ENCODE measurements at regions of chr1 and their contacts with region 1.

Region 1: GRCh38 chr1:235999259-235999925 is 65.5 kb downstream of the NID1 start:
- DNase-seq: peak; percentile 77
- H3K4me3 Mint-ChIP-seq: peak overlapping the region; percentile 32
- H3K27ac Mint-ChIP-seq: peak overlapping the region; percentile 94
- H3K4me1 Mint-ChIP-seq: peaks cover 80% of the 10 kb centered on the region
- H3K27me3 Mint-ChIP-seq: peaks cover 3% of the 10 kb centered on the region

Region 2: GRCh38 chr1:234373064-234373958 is 1626.1 kb before region 1 on chr1 and contains the start of gene COA6:
- intact Hi-C with region 1: loop called (anchors 1 kb)
- DNase-seq: peak; percentile 85
- H3K4me3 Mint-ChIP-seq: peak within 1 kb of the TSS; percentile 97
- H3K27ac Mint-ChIP-seq: peak within 1 kb of the TSS; percentile 96
- H3K4me1 Mint-ChIP-seq: peaks cover 57% of the 10 kb centered on the region
- H3K27me3 Mint-ChIP-seq: peaks cover 2% of the 10 kb centered on the region
- total RNA-seq, gene COA6: 57.2 and 66.9 TPM in 2 replicates

Region 3: GRCh38 chr1:235642011-235642942 is 357.1 kb before region 1 on chr1:
- intact Hi-C with region 1: loop called (anchors 1 kb)
- DNase-seq: peak; percentile 76
- H3K4me3 Mint-ChIP-seq: peak overlapping the region; percentile 67
- H3K27ac Mint-ChIP-seq: peak overlapping the region; percentile 92
- H3K4me1 Mint-ChIP-seq: peaks cover 71% of the 10 kb centered on the region
- H3K27me3 Mint-ChIP-seq: peaks cover 17% of the 10 kb centered on the region

Region 4: GRCh38 chr1:235802947-235803346 is 196.4 kb before region 1 on chr1:
- intact Hi-C with region 1: loop called (anchors 1 kb)
- DNase-seq: no peak
- H3K4me3 Mint-ChIP-seq: no peak overlapping the region
- H3K27ac Mint-ChIP-seq: no peak overlapping the region
- H3K4me1 Mint-ChIP-seq: peaks cover 6% of the 10 kb centered on the region
- H3K27me3 Mint-ChIP-seq: no peaks in the 10 kb centered on the region

Region 5: DNA sequence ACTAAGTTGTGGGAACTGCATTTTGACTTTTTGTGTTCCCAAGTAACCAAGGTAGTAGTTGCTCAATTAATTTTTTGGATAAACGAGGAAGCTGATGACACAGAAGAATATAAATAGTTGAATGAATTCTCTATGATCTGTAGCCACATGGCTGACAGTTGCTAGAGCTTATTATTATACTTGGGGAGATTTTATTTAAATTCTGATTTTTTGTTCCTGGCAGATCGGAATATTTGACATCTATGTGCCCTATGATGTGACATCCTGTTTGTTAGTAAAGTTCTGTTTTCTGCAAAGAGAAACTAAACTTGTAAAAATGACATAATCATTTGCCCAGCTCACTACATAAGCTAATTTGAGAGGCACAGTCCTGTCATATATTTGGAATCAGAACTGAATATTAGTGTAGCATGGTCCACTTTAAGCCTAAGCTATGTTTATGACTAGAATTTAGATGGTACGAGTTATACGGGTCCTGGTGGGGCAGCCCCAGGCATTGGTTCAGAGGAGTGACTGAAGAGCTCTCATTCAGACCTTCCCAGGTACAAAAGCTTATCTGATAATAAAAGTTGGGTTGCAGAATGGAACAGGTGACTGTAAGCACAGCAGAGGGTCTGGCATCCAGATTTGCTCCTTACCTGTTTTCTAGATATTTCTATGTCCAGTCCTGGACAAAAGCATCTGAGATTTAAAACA is 122.8 kb before region 1 on chr1:
- intact Hi-C with region 1: loop called (anchors 1 kb)
- DNase-seq: no peak
- H3K4me3 Mint-ChIP-seq: peak overlapping the region; percentile 69
- H3K27ac Mint-ChIP-seq: peak overlapping the region; percentile 98
- H3K4me1 Mint-ChIP-seq: peaks cover 88% of the 10 kb centered on the region
- H3K27me3 Mint-ChIP-seq: no peaks in the 10 kb centered on the region

Region 6: GRCh38 chr1:235952950-235953615 is 46.3 kb before region 1 on chr1:
- intact Hi-C with region 1: loop called (anchors 1 kb)
- DNase-seq: peak; percentile 36
- H3K4me3 Mint-ChIP-seq: peak overlapping the region; percentile 19
- H3K27ac Mint-ChIP-seq: peak overlapping the region; percentile 40
- H3K4me1 Mint-ChIP-seq: peaks cover 34% of the 10 kb centered on the region
- H3K27me3 Mint-ChIP-seq: peaks cover 30% of the 10 kb centered on the region

Region 7: GRCh38 chr1:235984041-235984825 is 15.2 kb before region 1 on chr1:
- intact Hi-C with region 1: no loop called
- DNase-seq: no peak
- H3K4me3 Mint-ChIP-seq: no peak overlapping the region
- H3K27ac Mint-ChIP-seq: no peak overlapping the region
- H3K4me1 Mint-ChIP-seq: peaks cover 12% of the 10 kb centered on the region
- H3K27me3 Mint-ChIP-seq: peaks cover 23% of the 10 kb centered on the region

Region 8: GRCh38 chr1:236083650-236084385 is 84.4 kb after region 1 on chr1:
- intact Hi-C with region 1: loop called (anchors 5 kb)
- DNase-seq: no peak
- H3K4me3 Mint-ChIP-seq: no peak overlapping the region
- H3K27ac Mint-ChIP-seq: no peak overlapping the region
- H3K4me1 Mint-ChIP-seq: peaks cover 9% of the 10 kb centered on the region
- H3K27me3 Mint-ChIP-seq: peaks cover 2% of the 10 kb centered on the region